ENCODE measurements at regions of chr3 and their contacts with region 1.

Region 1: DNA sequence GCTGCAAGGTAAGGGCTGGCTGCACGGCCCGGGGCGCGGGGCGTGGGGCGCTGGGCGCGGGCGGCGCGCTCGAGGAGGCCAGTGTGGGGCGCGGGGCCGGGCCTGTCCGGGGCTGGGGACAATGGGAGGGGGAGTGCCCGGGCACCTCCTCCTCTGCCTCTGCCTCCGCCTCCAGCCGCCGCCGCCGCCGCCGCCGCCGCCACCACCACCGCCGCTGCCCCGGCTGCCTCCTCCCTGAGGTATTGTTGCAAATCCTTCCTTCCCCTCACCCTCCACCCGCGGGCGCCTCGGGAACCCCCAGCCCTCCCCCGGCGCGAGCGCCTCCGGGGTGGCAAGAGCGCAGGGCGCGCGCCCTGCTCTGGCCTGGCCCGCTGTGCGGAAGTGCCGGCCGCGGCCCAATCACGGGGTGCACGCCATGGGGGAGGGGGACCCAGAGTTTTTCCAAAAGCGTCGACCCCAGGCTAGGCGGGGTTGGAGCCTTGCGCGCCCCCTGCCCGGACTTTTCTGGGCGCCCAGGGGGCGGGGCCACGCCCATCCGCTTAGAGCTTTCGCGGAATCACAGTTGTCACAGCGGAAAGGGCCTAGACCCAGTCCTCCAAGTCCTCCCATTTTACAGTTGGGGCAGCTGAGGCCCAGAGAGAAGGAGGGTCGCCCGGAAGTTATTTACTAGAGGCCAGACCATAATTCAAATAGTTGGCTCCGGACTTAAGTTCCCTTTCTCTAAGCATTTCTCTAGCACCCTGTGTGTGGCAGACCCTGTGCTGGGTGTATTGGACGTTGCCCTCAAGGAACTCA is at the start of gene LPP:
- DNase-seq: peak; percentile 64 to 88 (median 77)
- ATAC-seq: peak; percentile 92
- H3K4me3 ChIP-seq: peak within 1 kb of the TSS; percentile 76
- H3K4me3 Mint-ChIP-seq: peak within 1 kb of the TSS; percentile 78 to 95 (median 91)
- H3K27ac ChIP-seq: peak within 1 kb of the TSS; percentile 75
- H3K27ac Mint-ChIP-seq: peak within 1 kb of the TSS; percentile 58 to 98 (median 88)
- H3K4me1 ChIP-seq: peaks cover 21 to 29% of the 10 kb centered on the region in 2 donors
- H3K4me1 Mint-ChIP-seq: peaks cover 40 to 67% (median 58%) of the 10 kb centered on the region in 7 donors
- H3K27me3 ChIP-seq: no peaks in the 10 kb centered on the region
- H3K27me3 Mint-ChIP-seq: no peaks in the 10 kb centered on the region
- total RNA-seq, gene LPP: 12.5 to 95.2 (median 52.3) TPM

Region 2: DNA sequence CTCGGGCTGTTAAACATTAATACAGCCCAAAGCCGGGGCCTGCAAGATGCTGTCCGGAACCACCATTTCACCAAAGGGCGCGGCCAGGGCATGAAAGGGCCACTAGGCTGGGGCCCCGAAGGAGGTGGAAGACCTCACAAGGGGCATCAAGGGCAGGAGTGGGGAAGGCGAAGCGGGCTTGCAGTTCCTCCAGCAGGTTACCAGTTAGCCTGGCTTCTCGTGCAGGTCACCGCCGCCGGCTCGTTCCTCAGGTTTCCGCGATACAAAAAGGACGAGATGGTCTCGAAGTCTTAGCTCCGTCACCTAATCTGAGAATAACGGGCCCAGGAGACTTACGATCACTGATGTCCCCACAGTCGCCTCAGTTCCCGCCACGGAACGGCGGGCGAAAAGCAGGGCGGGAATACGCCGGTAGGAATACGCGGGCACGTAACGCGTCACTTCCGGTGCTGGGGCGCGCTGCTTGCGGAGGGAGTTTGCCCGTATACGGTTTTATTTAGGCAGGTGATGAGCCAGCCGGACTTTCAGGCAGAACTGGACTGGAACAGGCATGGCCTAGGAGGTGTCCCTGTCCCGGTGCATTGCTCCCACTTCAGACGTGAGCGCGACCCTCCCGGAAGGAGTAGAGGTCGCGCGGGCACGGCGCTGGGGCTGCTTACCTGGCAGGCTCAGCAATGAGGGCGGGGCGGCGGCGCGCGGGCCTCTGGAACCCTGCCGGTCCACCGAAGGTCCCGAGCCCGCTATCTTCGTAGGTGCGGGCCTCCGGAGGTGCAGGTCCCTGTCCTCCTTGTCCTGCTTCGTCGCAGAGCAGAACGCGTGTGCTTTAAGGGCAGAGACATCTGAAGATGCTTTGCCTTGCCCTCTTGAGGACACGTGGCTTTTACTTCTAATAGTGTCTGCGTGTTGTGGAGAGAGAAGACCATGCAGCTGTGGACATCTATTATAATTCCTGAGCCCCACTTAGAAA is 1347.8 kb before region 1 on chr3 and contains the start of gene RFC4:
- CTCF ChIA-PET with region 1: no interaction called
- POLR2A ChIA-PET with region 1: no interaction called
- intact Hi-C with region 1: no loop called
- DNase-seq: peak; percentile 66 to 86 (median 82)
- ATAC-seq: peak; percentile 91
- H3K4me3 ChIP-seq: peak within 1 kb of the TSS; percentile 95
- H3K4me3 Mint-ChIP-seq: peak within 1 kb of the TSS; percentile 89 to 97 (median 94)
- H3K27ac ChIP-seq: peak within 1 kb of the TSS; percentile 86
- H3K27ac Mint-ChIP-seq: peak within 1 kb of the TSS; percentile 84 to 97 (median 95)
- H3K4me1 ChIP-seq: peaks cover 17 to 21% of the 10 kb centered on the region in 2 donors
- H3K4me1 Mint-ChIP-seq: peaks cover 5 to 38% (median 18%) of the 10 kb centered on the region in 7 donors
- H3K27me3 ChIP-seq: no peaks in the 10 kb centered on the region
- H3K27me3 Mint-ChIP-seq: no peaks in the 10 kb centered on the region
- total RNA-seq, gene RFC4: 8.7 to 71.6 (median 22.1) TPM

Region 3: DNA sequence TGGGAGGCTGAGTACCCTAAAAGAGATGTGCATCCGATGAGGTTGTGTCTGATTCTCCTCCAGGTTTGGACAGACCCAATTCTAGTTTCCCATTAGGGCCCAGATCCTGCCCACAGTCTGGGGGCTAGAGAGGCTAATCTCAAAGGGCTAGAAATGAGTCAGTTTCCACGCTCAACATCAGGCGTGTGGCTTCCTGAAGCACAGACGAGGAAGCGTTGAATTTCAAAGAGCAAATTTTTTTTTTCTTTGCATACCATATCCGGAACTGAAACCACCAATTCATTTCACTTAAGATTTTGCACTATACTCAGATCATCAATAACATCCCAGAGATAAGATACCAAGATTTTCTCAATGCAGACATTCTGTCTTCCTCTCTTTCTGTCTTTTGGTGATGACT is 235.2 kb before region 1 on chr3:
- CTCF ChIA-PET with region 1: no interaction called
- POLR2A ChIA-PET with region 1: no interaction called
- intact Hi-C with region 1: loop called (anchors 1 to 2 kb)
- DNase-seq: peak in 8 of 9 donors; percentile 50 to 64 (median 60)
- ATAC-seq: peak; percentile 90
- H3K4me3 ChIP-seq: peak overlapping the region; percentile 48
- H3K4me3 Mint-ChIP-seq: peak overlapping the region; percentile 69 to 86 (median 81)
- H3K27ac ChIP-seq: peak overlapping the region; percentile 13
- H3K27ac Mint-ChIP-seq: peak overlapping the region; percentile 58 to 94 (median 90)
- H3K4me1 ChIP-seq: peaks cover 15 to 28% of the 10 kb centered on the region in 2 donors
- H3K4me1 Mint-ChIP-seq: peaks cover 34 to 80% (median 48%) of the 10 kb centered on the region in 7 donors
- H3K27me3 ChIP-seq: no peaks in the 10 kb centered on the region
- H3K27me3 Mint-ChIP-seq: peaks cover 0 to 10% (median 0%) of the 10 kb centered on the region in 5 donors

Region 4: GRCh38 chr3:188061133-188061532 is 93.1 kb before region 1 on chr3:
- CTCF ChIA-PET with region 1: no interaction called
- POLR2A ChIA-PET with region 1: no interaction called
- intact Hi-C with region 1: loop called in 1 of 2 experiments (anchors 5 kb)
- DNase-seq: peak in 6 of 9 donors; percentile 4 to 60 (median 11)
- ATAC-seq: peak; percentile 86
- H3K4me3 ChIP-seq: no peak overlapping the region
- H3K4me3 Mint-ChIP-seq: peak overlapping the region in 1 of 10 donors; percentile 62
- H3K27ac ChIP-seq: no peak overlapping the region
- H3K27ac Mint-ChIP-seq: peak overlapping the region in 4 of 9 donors; percentile 19 to 74 (median 31)
- H3K4me1 ChIP-seq: peaks cover 3 to 8% of the 10 kb centered on the region in 2 donors
- H3K4me1 Mint-ChIP-seq: peaks cover 0 to 25% (median 13%) of the 10 kb centered on the region in 7 donors
- H3K27me3 ChIP-seq: no peaks in the 10 kb centered on the region
- H3K27me3 Mint-ChIP-seq: no peaks in the 10 kb centered on the region

Region 5: DNA sequence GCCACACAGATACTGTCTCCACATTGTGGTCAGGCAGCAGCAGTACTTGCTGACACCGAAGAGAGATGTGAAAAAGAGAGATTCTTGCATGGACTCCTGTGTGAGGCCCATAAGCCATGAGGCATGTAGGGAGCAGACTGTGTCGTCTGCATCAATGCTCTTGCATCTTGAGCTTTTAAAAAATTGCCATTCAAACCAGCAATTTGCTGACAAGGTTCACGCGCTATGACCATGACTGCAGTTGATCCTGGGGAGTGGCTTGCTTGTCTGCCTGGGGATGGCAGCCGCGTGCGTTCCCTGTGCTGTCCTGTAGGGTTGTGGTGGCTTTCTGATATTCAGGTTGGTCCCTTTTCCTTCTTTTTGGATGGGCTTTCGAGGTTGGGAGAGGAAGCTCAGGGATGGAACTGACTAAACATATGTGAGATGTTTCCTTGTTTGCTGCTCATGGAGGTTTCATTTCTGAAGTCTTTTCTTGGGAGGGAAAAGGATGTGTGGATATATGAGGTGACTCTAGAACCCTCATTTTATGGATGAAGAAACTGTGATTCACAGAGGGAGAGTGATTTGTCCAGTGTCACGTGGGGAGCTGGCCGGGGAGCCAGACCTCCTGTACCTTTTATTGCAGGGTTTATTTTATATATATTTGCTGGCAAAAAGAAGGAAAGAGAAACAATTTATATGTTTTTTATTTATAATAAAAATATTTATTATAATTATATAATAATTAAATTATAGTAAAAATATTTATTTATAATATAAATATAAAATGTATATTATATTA is 48.3 kb after region 1 on chr3:
- CTCF ChIA-PET with region 1: no interaction called
- POLR2A ChIA-PET with region 1: no interaction called
- intact Hi-C with region 1: loop called in 1 of 2 experiments (anchors 5 kb)
- DNase-seq: no peak
- ATAC-seq: no peak
- H3K4me3 ChIP-seq: no peak overlapping the region
- H3K4me3 Mint-ChIP-seq: no peak overlapping the region
- H3K27ac ChIP-seq: no peak overlapping the region
- H3K27ac Mint-ChIP-seq: peak overlapping the region in 1 of 9 donors; percentile 42
- H3K4me1 ChIP-seq: no peaks in the 10 kb centered on the region
- H3K4me1 Mint-ChIP-seq: peaks cover 14 to 28% (median 22%) of the 10 kb centered on the region in 7 donors
- H3K27me3 ChIP-seq: no peaks in the 10 kb centered on the region
- H3K27me3 Mint-ChIP-seq: no peaks in the 10 kb centered on the region

Region 6: DNA sequence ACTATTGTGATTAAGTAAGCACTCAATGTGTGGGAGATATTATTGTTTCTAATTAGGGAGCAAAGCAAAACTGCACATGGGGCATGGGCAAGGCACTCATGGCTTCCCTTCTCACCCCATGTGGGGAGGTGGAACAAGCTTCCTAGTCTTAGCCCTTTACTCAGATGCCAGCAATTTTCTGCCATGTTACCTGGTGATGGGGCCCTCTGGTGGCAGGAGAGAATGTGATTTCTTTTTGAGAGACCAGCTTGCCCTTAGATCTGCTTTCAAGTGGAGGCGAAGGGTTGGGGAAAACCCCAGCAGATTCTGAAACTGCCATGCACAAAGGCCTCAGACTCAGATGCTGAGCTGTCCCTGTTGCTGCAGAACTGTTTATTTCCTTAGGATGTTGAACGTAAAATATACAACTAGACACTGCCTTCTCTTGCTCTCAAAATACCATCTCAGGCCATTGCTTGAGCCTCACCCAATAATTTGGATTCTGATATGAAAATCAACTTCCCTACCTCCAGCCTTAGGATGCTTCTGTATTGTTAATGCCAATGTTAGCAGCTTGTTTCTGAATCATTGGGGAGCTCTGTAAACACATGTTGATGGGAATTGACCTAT is 887.4 kb after region 1 on chr3:
- CTCF ChIA-PET with region 1: no interaction called
- POLR2A ChIA-PET with region 1: no interaction called
- intact Hi-C with region 1: loop called (anchors 10 kb)
- DNase-seq: peak; percentile 33 to 74 (median 70)
- ATAC-seq: peak; percentile 97
- H3K4me3 ChIP-seq: no peak overlapping the region
- H3K4me3 Mint-ChIP-seq: peak overlapping the region in 1 of 10 donors; percentile 61
- H3K27ac ChIP-seq: no peak overlapping the region
- H3K27ac Mint-ChIP-seq: peak overlapping the region in 3 of 9 donors; percentile 9 to 71 (median 41)
- H3K4me1 ChIP-seq: no peaks in the 10 kb centered on the region
- H3K4me1 Mint-ChIP-seq: peaks cover 0 to 52% (median 4%) of the 10 kb centered on the region in 7 donors
- H3K27me3 ChIP-seq: no peaks in the 10 kb centered on the region
- H3K27me3 Mint-ChIP-seq: no peaks in the 10 kb centered on the region

Measured in naive thymus-derived CD4-positive, alpha-beta T cell (primary cell).